Activated B cell treated with CpG ODN at 0.5 μM for 24 hours (primary cell): ENCODE measurements at regions of chr13 and their contacts with region 1.

Region 1: GRCh38 chr13:28819735-28820098 is 422 bp upstream of the MTUS2 start:
- DNase-seq: peak; percentile 26
- ATAC-seq: peak; percentile 75
- H3K4me3 Mint-ChIP-seq: no peak overlapping the region
- H3K27ac Mint-ChIP-seq: no peak overlapping the region
- H3K4me1 Mint-ChIP-seq: peaks cover 11% of the 10 kb centered on the region
- H3K27me3 Mint-ChIP-seq: peaks cover 57% of the 10 kb centered on the region
- CTCF ChIP-seq: no peak

Region 2: GRCh38 chr13:28671126-28671792 is 148.5 kb before region 1 on chr13:
- CTCF ChIA-PET with region 1: no interaction called
- POLR2A ChIA-PET with region 1: no interaction called
- intact Hi-C with region 1: no loop called
- DNase-seq: no peak
- ATAC-seq: no peak
- H3K4me3 Mint-ChIP-seq: no peak overlapping the region
- H3K27ac Mint-ChIP-seq: no peak overlapping the region
- H3K4me1 Mint-ChIP-seq: peaks cover 23% of the 10 kb centered on the region
- H3K27me3 Mint-ChIP-seq: no peaks in the 10 kb centered on the region
- CTCF ChIP-seq: no peak

Region 3: DNA sequence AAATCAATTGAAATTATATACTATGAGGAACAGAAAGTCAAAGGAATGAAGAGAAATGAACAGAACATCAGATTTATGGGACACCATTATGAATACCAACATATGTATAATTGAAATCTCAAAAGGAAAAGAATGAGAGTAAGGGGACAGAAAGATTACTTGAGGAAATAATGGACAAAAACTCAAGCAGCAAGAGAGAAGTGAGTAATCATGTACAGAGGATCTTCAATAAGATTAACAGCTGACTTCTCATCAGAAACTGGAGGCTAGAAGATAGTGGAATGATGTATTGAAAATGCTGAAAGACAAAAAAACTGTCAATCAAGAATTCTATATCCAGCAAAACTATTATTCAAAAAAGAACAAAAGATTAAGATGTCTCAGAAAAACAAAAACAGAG is 10.9 kb after region 1 on chr13:
- CTCF ChIA-PET with region 1: no interaction called
- POLR2A ChIA-PET with region 1: no interaction called
- intact Hi-C with region 1: no loop called
- DNase-seq: no peak
- ATAC-seq: no peak
- H3K4me3 Mint-ChIP-seq: no peak overlapping the region
- H3K27ac Mint-ChIP-seq: no peak overlapping the region
- H3K4me1 Mint-ChIP-seq: no peaks in the 10 kb centered on the region
- H3K27me3 Mint-ChIP-seq: peaks cover 5% of the 10 kb centered on the region
- CTCF ChIP-seq: no peak

Region 4: GRCh38 chr13:28935104-28935503 is 115.4 kb after region 1 on chr13:
- CTCF ChIA-PET with region 1: no interaction called
- POLR2A ChIA-PET with region 1: no interaction called
- intact Hi-C with region 1: no loop called
- DNase-seq: no peak
- ATAC-seq: no peak
- H3K4me3 Mint-ChIP-seq: no peak overlapping the region
- H3K27ac Mint-ChIP-seq: no peak overlapping the region
- H3K4me1 Mint-ChIP-seq: no peaks in the 10 kb centered on the region
- H3K27me3 Mint-ChIP-seq: peaks cover 4% of the 10 kb centered on the region
- CTCF ChIP-seq: no peak

Region 5: DNA sequence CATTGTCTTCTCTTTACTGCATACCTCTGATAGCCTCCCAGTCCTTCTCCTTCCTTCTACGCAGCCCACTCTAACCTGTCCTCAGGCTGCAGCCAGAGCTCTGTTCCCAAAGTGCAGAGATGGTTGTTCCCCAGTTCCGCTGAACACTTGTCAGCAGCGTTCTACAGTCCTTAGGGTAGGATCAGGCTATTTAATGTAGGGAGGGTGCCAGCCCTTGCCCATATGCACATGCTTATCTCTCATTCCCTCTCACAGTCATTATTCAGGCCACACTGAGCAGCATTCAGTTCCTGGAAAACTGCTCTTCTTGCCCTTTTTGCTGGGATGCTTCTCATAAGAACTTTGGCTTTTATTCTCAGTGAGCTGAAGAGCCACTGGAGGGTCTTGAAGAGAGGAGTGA is 181.1 kb after region 1 on chr13:
- CTCF ChIA-PET with region 1: no interaction called
- POLR2A ChIA-PET with region 1: no interaction called
- intact Hi-C with region 1: no loop called
- DNase-seq: no peak
- ATAC-seq: no peak
- H3K4me3 Mint-ChIP-seq: no peak overlapping the region
- H3K27ac Mint-ChIP-seq: no peak overlapping the region
- H3K4me1 Mint-ChIP-seq: no peaks in the 10 kb centered on the region
- H3K27me3 Mint-ChIP-seq: peaks cover 15% of the 10 kb centered on the region
- CTCF ChIP-seq: no peak

Region 6: DNA sequence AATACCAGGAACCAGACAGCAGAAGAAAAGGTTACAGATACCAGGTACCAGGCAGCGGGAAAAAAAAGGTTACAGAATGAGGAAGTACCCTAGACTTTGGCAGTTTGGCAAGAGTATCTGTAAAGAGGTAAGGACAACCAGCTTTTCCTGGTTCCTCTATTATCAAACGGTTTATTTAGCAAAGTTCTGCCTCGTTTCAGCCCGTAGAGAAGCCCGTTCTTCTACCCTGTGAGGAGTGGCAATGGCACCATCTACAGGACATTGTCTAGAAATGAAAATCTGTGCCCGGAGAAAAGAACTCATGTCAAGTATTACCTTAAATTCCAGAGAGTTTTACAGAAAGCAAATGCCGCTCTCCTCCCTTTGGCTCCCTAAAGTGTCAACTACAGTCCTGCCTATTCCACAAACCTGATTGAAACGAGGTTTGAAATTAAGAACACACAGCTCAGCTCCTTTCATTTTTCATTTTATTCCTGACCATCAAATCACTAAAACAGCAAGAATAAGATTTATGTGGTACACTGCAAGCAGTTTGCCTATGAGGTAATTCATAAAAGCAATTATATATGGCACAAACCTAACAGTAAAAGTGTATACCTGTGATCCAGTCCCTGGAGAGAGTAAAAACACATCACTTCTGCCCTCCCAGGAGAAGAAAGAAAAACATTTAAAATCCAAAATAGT is 549.5 kb after region 1 on chr13:
- CTCF ChIA-PET with region 1: no interaction called
- POLR2A ChIA-PET with region 1: no interaction called
- intact Hi-C with region 1: loop called (anchors 2 kb)
- DNase-seq: no peak
- ATAC-seq: peak; percentile 79
- H3K4me3 Mint-ChIP-seq: no peak overlapping the region
- H3K27ac Mint-ChIP-seq: no peak overlapping the region
- H3K4me1 Mint-ChIP-seq: peaks cover 7% of the 10 kb centered on the region
- H3K27me3 Mint-ChIP-seq: peaks cover 6% of the 10 kb centered on the region
- CTCF ChIP-seq: no peak